ENCODE measurements at regions of chr17 and their contacts with region 1.

Region 1: DNA sequence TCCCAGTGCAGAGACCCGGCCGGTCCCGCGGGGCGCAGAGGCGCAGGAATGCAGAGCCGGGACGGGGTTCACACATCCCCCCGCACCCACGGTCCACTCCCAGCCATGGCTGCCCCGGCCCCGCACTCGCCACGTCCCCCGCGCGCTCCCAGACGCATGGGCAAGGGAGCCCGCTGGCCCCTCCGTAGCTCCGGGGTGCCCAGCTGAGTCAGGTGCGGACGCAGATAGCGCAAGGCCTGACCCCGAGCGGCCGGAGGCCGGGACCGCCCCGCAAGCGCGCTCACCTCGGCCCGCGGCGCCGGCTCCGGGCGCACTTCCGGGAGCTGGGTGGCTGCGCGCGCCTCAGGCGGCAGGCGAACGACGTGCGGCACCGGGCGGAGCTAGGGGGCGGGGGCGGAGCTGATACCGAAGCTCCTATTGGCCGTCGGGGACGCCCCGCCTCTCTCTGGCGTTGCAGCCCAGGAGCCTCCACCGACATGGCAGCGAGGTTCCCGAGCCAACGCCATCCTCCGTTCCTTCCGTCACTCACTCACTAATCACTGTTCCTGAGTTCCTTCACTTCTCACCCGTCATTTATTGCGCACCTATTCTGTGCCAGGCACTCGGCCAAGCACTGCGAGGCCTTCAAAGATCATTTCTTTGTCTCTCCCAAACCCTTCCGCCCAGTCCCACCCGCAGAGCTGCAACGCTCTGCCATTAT is at the start of gene ZNF18:
- DNase-seq: peak; percentile 96
- ATAC-seq: peak; percentile 92 to 93
- H3K4me3 ChIP-seq: peak within 1 kb of the TSS; percentile 85 to 94 (median 92)
- H3K27ac ChIP-seq: peak within 1 kb of the TSS; percentile 90 to 95 (median 93)
- H3K4me1 ChIP-seq: peaks cover 7 to 11% of the 10 kb centered on the region in 2 donors
- H3K27me3 ChIP-seq: no peaks in the 10 kb centered on the region
- CTCF ChIP-seq: no peak
- POLR2A ChIP-seq: peak; percentile 98
- total RNA-seq, gene ZNF18: 4.7 to 15.8 (median 7.8) TPM

Region 2: GRCh38 chr17:10729334-10730193 is 1267.7 kb before region 1 on chr17 and contains the start of gene TMEM220:
- in situ Hi-C with region 1: loop called in 1 of 4 experiments (anchors 25 kb)
- intact Hi-C with region 1: no loop called
- DNase-seq: peak; percentile 59 to 78
- ATAC-seq: peak; percentile 88 to 93
- H3K4me3 ChIP-seq: peak within 1 kb of the TSS; percentile 67 to 93 (median 82)
- H3K27ac ChIP-seq: peak within 1 kb of the TSS; percentile 92 to 97 (median 95)
- H3K4me1 ChIP-seq: no peaks in the 10 kb centered on the region
- H3K27me3 ChIP-seq: no peaks in the 10 kb centered on the region
- CTCF ChIP-seq: no peak
- POLR2A ChIP-seq: peak; percentile 61 to 77
- total RNA-seq, gene TMEM220: 3.7 to 8.6 (median 3.9) TPM

Region 3: DNA sequence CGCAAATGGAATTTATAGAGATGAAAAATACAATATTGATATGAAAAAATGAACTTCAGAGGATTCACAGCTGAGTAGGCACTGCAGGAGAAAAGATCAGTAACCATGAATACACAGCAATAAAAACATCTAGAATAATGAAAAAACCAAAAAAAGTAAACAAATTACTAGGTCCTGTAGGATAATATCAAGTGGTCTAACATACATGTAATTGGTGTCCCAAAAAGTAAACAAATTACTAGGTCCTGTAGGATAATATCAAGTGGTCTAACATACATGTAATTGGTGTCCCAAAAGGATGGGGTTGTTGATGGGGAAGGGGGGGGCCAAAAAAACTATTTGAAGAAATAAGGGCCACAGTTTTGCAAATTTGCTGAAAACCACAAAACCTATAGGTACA is 43.4 kb before region 1 on chr17:
- in situ Hi-C with region 1: no loop called
- intact Hi-C with region 1: no loop called
- DNase-seq: no peak
- ATAC-seq: no peak
- H3K4me3 ChIP-seq: no peak overlapping the region
- H3K27ac ChIP-seq: no peak overlapping the region
- H3K4me1 ChIP-seq: no peaks in the 10 kb centered on the region
- H3K27me3 ChIP-seq: no peaks in the 10 kb centered on the region
- CTCF ChIP-seq: no peak
- POLR2A ChIP-seq: no peak

Region 4: DNA sequence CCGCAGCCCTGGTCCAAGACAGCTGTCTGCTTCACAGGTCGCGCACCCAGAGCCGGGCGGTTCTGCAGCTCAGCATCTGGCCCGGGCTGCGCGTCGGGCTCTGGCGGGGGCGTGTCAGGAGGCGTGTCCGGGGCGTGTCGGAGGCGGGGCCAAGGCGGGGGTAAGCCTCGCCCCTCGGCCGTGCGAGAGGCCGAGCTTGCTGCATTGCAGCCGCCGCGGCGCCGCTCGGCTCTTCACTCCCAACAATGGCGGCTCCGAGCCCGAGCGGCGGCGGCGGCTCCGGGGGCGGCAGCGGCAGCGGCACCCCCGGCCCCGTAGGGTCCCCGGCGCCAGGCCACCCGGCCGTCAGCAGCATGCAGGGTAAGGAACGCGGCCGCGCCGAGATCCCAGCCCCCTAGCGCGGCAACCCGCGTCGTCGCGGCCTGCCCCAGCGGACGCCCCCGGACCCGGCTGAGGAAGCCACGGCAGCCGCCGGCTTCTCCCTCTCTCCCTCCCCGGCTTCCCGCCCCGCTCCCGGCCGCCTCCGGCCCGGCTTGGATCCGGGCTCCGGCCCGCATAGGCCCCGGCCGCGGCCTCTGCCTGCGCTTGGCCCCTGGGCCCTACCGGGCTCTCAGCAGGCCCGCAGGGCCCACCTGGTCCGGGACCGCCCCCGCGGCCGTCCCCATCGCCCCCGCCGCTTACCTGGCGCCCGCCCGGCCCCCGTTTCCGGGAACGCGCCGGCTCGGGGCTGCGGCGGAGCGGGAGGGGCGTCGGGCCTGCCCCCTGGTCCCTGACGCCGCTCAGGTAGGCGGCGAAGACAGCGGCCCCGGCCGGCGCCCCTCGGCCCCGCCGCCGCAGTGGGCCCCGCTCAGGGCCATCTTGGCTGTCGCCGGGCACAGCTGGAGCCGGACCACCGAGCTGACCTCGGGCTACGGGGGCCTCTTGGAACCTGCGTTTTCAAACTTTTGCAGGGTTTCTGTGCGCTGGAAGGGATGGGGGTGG is 23.6 kb after region 1 on chr17 and contains the start of gene MAP2K4:
- in situ Hi-C with region 1: no loop called
- intact Hi-C with region 1: loop called (anchors 1 kb)
- DNase-seq: peak; percentile 83 to 87
- ATAC-seq: peak; percentile 96 to 98
- H3K4me3 ChIP-seq: peak within 1 kb of the TSS; percentile 62 to 93 (median 70)
- H3K27ac ChIP-seq: peak within 1 kb of the TSS; percentile 65 to 93 (median 82)
- H3K4me1 ChIP-seq: peaks cover 27 to 41% of the 10 kb centered on the region in 2 donors
- H3K27me3 ChIP-seq: no peaks in the 10 kb centered on the region
- CTCF ChIP-seq: peak in 1 of 5 experiments; percentile 11
- POLR2A ChIP-seq: peak; percentile 84 to 89
- total RNA-seq, gene MAP2K4: 29.8 to 58.6 (median 30.2) TPM

Region 5: DNA sequence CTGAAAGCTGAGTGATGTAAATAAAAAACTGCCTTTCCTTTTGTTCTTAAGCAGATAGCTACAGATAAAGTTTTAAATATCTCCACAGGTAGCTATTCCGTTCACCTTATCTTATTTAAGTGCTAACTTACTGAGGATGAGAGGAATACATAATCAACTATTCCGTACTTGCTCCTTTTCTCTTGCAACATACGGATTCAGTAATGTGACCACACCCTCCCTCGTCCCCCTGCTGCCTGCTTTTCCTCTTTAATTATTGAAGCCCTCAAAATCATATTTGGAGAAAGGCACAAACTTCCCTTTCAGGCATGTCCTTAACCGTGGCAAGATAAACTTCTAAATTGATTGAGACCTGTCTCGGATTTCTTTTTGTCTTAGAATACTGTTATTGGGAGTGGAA is 124.8 kb after region 1 on chr17:
- in situ Hi-C with region 1: no loop called
- intact Hi-C with region 1: loop called (anchors 5 kb)
- DNase-seq: no peak
- ATAC-seq: no peak
- H3K4me3 ChIP-seq: no peak overlapping the region
- H3K27ac ChIP-seq: peak overlapping the region in 1 of 4 donors; percentile 5
- H3K4me1 ChIP-seq: peaks cover 8 to 10% of the 10 kb centered on the region in 2 donors
- H3K27me3 ChIP-seq: no peaks in the 10 kb centered on the region
- CTCF ChIP-seq: no peak
- POLR2A ChIP-seq: no peak